Activated CD4-positive, alpha-beta T cell treated with anti-CD3 and anti-CD28 coated beads, Interleukin-2, amount 10 ng/mL, durations not matched to agents 24 days and 14 days (primary cell): ENCODE measurements at regions of chr4 and their contacts with region 1.

Region 1: GRCh38 chr4:143399113-143399949 is 62.7 kb downstream of the GAB1 start:
- DNase-seq: peak; percentile 70
- H3K4me3 Mint-ChIP-seq: no peak overlapping the region
- H3K27ac Mint-ChIP-seq: no peak overlapping the region
- H3K4me1 Mint-ChIP-seq: peaks cover 7% of the 10 kb centered on the region
- H3K27me3 Mint-ChIP-seq: peaks cover 19% of the 10 kb centered on the region

Region 2: DNA sequence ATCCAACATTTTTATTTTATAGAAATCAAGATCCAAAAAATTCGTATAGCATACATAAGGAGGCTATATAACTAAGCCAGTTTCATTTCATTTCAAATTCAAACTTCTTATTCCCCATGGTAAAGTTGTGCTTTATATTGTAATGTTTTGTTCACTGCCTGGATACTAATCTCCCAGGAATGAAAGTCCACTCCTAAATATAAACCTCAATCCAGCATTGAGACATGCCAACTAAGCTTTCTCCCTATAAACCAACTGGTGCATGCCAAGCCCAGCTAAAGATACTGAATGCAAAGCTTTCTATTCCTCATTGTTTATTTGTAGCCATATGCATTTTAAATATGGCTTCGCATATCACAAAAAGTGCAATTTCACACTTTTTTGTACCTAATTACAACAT is 489.4 kb before region 1 on chr4:
- intact Hi-C with region 1: no loop called
- DNase-seq: no peak
- H3K4me3 Mint-ChIP-seq: no peak overlapping the region
- H3K27ac Mint-ChIP-seq: no peak overlapping the region
- H3K4me1 Mint-ChIP-seq: no peaks in the 10 kb centered on the region
- H3K27me3 Mint-ChIP-seq: peaks cover 5% of the 10 kb centered on the region

Region 3: GRCh38 chr4:143335979-143336780 is 63.2 kb before region 1 on chr4:
- intact Hi-C with region 1: loop called (anchors 10 kb)
- DNase-seq: peak; percentile 76
- H3K4me3 Mint-ChIP-seq: peak overlapping the region; percentile 86
- H3K27ac Mint-ChIP-seq: no peak overlapping the region
- H3K4me1 Mint-ChIP-seq: peaks cover 6% of the 10 kb centered on the region
- H3K27me3 Mint-ChIP-seq: peaks cover 53% of the 10 kb centered on the region

Region 4: DNA sequence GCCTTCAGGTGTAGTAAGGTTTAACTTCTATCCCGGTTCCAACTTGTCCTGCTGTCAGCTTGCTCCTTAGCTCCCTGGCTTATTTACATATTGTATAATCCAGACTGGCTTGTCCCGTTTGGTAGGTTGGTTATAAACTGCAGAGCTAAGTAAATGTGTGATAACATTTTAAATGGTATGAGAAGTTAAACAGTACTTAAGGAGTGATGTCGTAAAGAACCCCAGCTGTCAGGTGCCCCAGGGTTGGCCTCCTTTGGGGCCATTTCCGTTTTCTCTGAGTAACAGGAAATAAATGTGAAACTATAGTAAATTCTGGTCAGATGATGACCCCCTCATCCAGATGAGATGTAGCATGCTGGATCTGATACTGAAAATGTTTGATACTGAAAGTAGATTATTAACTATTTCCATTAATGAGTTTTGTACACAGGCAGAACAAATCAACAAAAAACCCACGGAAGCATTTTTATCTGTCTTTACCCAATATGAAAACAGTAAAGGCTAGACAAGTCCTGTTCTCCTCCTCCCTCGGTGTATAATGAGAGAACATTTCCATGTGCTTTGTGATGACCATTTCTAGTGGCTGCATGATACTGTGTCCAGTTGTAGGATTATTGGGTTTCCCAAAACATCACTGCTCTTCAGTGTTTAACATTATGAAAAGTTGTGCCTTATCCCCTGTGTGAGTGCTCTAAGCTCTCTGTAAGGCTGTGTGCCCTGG is 40.2 kb before region 1 on chr4:
- intact Hi-C with region 1: loop called (anchors 5 kb)
- DNase-seq: peak; percentile 74
- H3K4me3 Mint-ChIP-seq: peak overlapping the region; percentile 67
- H3K27ac Mint-ChIP-seq: peak overlapping the region; percentile 91
- H3K4me1 Mint-ChIP-seq: peaks cover 20% of the 10 kb centered on the region
- H3K27me3 Mint-ChIP-seq: peaks cover 9% of the 10 kb centered on the region

Region 5: DNA sequence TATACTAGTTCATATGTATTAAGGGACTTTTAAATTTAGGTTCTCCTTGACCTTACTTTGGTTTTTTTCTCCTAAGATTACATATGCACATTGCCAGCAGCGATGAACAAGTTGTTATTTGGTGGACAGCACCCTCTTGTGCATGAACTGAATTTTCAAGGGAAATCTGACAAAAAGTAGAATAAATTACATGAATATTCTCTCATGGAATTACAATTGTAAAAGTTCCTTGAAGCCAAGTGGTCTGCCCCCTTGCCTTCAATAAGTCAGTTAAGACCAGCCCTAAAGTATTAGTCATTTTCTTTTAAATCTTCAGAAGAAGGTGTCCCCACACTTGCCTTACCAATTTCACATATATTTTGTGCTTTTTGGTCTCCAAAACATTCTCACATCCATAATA is 83.5 kb after region 1 on chr4:
- intact Hi-C with region 1: loop called (anchors 2 kb)
- DNase-seq: peak; percentile 65
- H3K4me3 Mint-ChIP-seq: no peak overlapping the region
- H3K27ac Mint-ChIP-seq: no peak overlapping the region
- H3K4me1 Mint-ChIP-seq: no peaks in the 10 kb centered on the region
- H3K27me3 Mint-ChIP-seq: peaks cover 15% of the 10 kb centered on the region